ENCODE measurements at regions of chr3 and their contacts with region 1.

Region 1: DNA sequence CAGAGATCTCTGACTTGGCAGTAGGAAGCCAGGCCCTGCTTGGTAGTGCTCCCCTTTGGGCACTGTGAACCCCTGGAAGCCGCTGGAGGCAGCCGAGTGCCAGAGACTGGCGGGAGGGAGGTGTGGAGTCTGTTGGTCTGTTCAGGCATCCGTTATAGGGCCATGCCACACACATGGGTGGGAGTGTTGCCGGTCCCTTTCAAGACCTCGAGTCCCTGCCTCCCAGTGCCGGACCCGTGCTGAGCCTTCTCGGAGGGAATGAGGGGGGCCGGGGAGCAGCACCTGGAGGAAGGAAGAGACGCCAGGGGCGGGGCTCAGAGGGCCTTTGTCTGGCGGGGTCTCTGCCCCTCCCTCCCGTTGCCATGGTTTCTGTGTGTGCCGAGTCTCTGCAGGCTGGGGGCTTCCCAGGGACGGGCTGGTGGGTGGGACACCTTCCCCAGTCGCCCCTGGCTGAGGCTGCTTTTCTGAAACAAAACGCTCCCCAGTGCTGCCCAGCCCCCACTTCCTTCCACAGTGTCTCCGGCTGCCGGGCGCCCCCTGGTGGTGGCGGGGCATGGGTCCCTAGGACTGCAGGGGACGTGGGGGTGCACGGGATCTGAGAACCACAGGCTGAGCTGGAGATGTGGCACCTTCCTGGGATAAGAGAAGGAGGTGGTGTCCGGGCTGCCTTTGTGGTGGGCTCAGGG is 10.0 kb downstream of the GNAI2 start:
- DNase-seq: peak; percentile 92 to 98 (median 94)
- ATAC-seq: peak; percentile 80
- H3K4me3 ChIP-seq: peak overlapping the region; percentile 47
- H3K4me3 Mint-ChIP-seq: peak overlapping the region; percentile 83
- H3K27ac ChIP-seq: peak overlapping the region; percentile 89 to 90
- H3K27ac Mint-ChIP-seq: peak overlapping the region; percentile 92
- H3K4me1 ChIP-seq: peaks cover 100% of the 10 kb centered on the region
- H3K4me1 Mint-ChIP-seq: peaks cover 79% of the 10 kb centered on the region
- H3K27me3 ChIP-seq: no peaks in the 10 kb centered on the region
- H3K27me3 Mint-ChIP-seq: no peaks in the 10 kb centered on the region
- CTCF ChIP-seq: peak; percentile 98

Region 2: GRCh38 chr3:49570028-49570654 is 675.8 kb before region 1 on chr3:
- CTCF ChIA-PET with region 1: no interaction called
- POLR2A ChIA-PET with region 1: no interaction called
- intact Hi-C with region 1: no loop called
- DNase-seq: no peak
- ATAC-seq: no peak
- H3K4me3 ChIP-seq: no peak overlapping the region
- H3K4me3 Mint-ChIP-seq: no peak overlapping the region
- H3K27ac ChIP-seq: no peak overlapping the region
- H3K27ac Mint-ChIP-seq: no peak overlapping the region
- H3K4me1 ChIP-seq: no peaks in the 10 kb centered on the region
- H3K4me1 Mint-ChIP-seq: no peaks in the 10 kb centered on the region
- H3K27me3 ChIP-seq: no peaks in the 10 kb centered on the region
- H3K27me3 Mint-ChIP-seq: peaks cover 8% of the 10 kb centered on the region
- CTCF ChIP-seq: no peak

Region 3: GRCh38 chr3:50088725-50089608 is 157.0 kb before region 1 on chr3 and contains the start of gene RBM5:
- CTCF ChIA-PET with region 1: no interaction called
- POLR2A ChIA-PET with region 1: no interaction called
- intact Hi-C with region 1: no loop called
- DNase-seq: peak; percentile 83 to 95 (median 89)
- ATAC-seq: peak; percentile 99
- H3K4me3 ChIP-seq: peak within 1 kb of the TSS; percentile 73
- H3K4me3 Mint-ChIP-seq: peak within 1 kb of the TSS; percentile 97
- H3K27ac ChIP-seq: peak within 1 kb of the TSS; percentile 88 to 92
- H3K27ac Mint-ChIP-seq: peak within 1 kb of the TSS; percentile 99
- H3K4me1 ChIP-seq: peaks cover 25% of the 10 kb centered on the region
- H3K4me1 Mint-ChIP-seq: peaks cover 37% of the 10 kb centered on the region
- H3K27me3 ChIP-seq: no peaks in the 10 kb centered on the region
- H3K27me3 Mint-ChIP-seq: no peaks in the 10 kb centered on the region
- CTCF ChIP-seq: no peak
- total RNA-seq, gene RBM5: 324 to 330 TPM

Region 4: DNA sequence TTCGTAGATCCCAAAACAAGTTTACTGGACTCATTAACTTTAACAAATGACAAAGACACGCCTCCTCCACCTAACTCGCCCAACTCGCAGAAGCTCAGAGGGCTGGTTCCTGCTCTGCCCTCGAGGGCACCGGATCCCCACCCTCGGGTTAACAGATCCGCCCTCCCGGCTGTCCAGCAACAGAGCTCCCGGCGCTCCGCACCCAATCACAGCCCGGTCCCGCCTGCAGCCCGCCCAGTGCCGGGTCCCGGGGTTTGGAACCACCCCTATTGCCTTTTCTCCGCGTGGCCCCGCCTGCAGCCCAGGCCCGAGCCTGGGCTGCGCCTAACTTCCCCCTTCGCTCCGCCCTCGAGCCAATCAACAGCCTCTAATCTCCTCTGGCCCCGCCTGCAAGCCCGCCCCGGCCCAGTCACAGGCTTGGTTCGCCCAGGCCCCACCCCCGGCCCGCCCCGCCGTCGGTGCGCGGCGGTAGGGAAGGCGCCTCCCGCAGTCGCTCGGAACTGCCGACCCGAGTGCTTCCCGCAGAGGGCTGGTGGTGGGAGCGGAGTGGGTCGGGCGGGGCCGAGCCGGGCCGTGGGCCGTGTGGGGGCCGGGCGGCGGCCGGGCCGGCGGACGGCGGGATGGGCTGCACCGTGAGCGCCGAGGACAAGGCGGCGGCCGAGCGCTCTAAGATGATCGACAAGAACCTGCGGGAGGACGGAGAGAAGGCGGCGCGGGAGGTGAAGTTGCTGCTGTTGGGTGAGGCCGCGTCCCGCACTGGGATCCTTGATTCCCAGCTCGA is 10.1 kb before region 1 on chr3 and contains the start of gene GNAI2:
- CTCF ChIA-PET with region 1: interaction called, 22 read pairs
- POLR2A ChIA-PET with region 1: interaction called, 60 read pairs
- intact Hi-C with region 1: loop called (anchors 1 kb)
- DNase-seq: peak; percentile 97 to 100 (median 99)
- ATAC-seq: peak; percentile 85
- H3K4me3 ChIP-seq: peak within 1 kb of the TSS; percentile 99
- H3K4me3 Mint-ChIP-seq: peak within 1 kb of the TSS; percentile 94
- H3K27ac ChIP-seq: peak within 1 kb of the TSS; percentile 73 to 80
- H3K27ac Mint-ChIP-seq: peak within 1 kb of the TSS; percentile 92
- H3K4me1 ChIP-seq: peaks cover 47% of the 10 kb centered on the region
- H3K4me1 Mint-ChIP-seq: peaks cover 45% of the 10 kb centered on the region
- H3K27me3 ChIP-seq: no peaks in the 10 kb centered on the region
- H3K27me3 Mint-ChIP-seq: no peaks in the 10 kb centered on the region
- CTCF ChIP-seq: no peak
- total RNA-seq, gene GNAI2: 204 to 217 TPM

Region 5: GRCh38 chr3:50260027-50260941 is 14.3 kb after region 1 on chr3:
- CTCF ChIA-PET with region 1: interaction called, 11 read pairs
- POLR2A ChIA-PET with region 1: interaction called, 10 read pairs
- intact Hi-C with region 1: no loop called
- DNase-seq: peak; percentile 58 to 92 (median 74)
- ATAC-seq: peak; percentile 91
- H3K4me3 ChIP-seq: peak overlapping the region; percentile 52
- H3K4me3 Mint-ChIP-seq: peak overlapping the region; percentile 74
- H3K27ac ChIP-seq: peak overlapping the region in 1 of 2 donors; percentile 29
- H3K27ac Mint-ChIP-seq: peak overlapping the region; percentile 51
- H3K4me1 ChIP-seq: peaks cover 15% of the 10 kb centered on the region
- H3K4me1 Mint-ChIP-seq: peaks cover 3% of the 10 kb centered on the region
- H3K27me3 ChIP-seq: no peaks in the 10 kb centered on the region
- H3K27me3 Mint-ChIP-seq: no peaks in the 10 kb centered on the region
- CTCF ChIP-seq: peak; percentile 87

Region 6: GRCh38 chr3:50388016-50388719 is 142.2 kb after region 1 on chr3:
- CTCF ChIA-PET with region 1: no interaction called
- POLR2A ChIA-PET with region 1: no interaction called
- intact Hi-C with region 1: no loop called
- DNase-seq: no peak
- ATAC-seq: no peak
- H3K4me3 ChIP-seq: no peak overlapping the region
- H3K4me3 Mint-ChIP-seq: no peak overlapping the region
- H3K27ac ChIP-seq: no peak overlapping the region
- H3K27ac Mint-ChIP-seq: no peak overlapping the region
- H3K4me1 ChIP-seq: no peaks in the 10 kb centered on the region
- H3K4me1 Mint-ChIP-seq: no peaks in the 10 kb centered on the region
- H3K27me3 ChIP-seq: no peaks in the 10 kb centered on the region
- H3K27me3 Mint-ChIP-seq: no peaks in the 10 kb centered on the region
- CTCF ChIP-seq: no peak

Region 7: GRCh38 chr3:50652709-50653108 is 406.7 kb after region 1 on chr3:
- CTCF ChIA-PET with region 1: no interaction called
- POLR2A ChIA-PET with region 1: no interaction called
- intact Hi-C with region 1: no loop called
- DNase-seq: peak; percentile 20 to 74 (median 50)
- ATAC-seq: peak; percentile 64
- H3K4me3 ChIP-seq: no peak overlapping the region
- H3K4me3 Mint-ChIP-seq: no peak overlapping the region
- H3K27ac ChIP-seq: no peak overlapping the region
- H3K27ac Mint-ChIP-seq: peak overlapping the region; percentile 2
- H3K4me1 ChIP-seq: peaks cover 6% of the 10 kb centered on the region
- H3K4me1 Mint-ChIP-seq: peaks cover 7% of the 10 kb centered on the region
- H3K27me3 ChIP-seq: no peaks in the 10 kb centered on the region
- H3K27me3 Mint-ChIP-seq: no peaks in the 10 kb centered on the region
- CTCF ChIP-seq: peak; percentile 69